ENCODE measurements at regions of chr12 and their contacts with region 1.

Region 1: GRCh38 chr12:29782285-29782870 is 1.4 kb downstream of the TMTC1 start:
- DNase-seq: peak in 1 of 2 donors; percentile 24
- ATAC-seq: peak; percentile 25 to 64 (median 42)
- H3K4me3 ChIP-seq: peak overlapping the region; percentile 48 to 93 (median 82)
- H3K27ac ChIP-seq: peak overlapping the region; percentile 63 to 94 (median 89)
- H3K4me1 ChIP-seq: peaks cover 0 to 45% (median 20%) of the 10 kb centered on the region in 9 donors
- H3K27me3 ChIP-seq: peaks cover 0 to 39% (median 0%) of the 10 kb centered on the region in 7 donors
- CTCF ChIP-seq: no peak

Region 2: DNA sequence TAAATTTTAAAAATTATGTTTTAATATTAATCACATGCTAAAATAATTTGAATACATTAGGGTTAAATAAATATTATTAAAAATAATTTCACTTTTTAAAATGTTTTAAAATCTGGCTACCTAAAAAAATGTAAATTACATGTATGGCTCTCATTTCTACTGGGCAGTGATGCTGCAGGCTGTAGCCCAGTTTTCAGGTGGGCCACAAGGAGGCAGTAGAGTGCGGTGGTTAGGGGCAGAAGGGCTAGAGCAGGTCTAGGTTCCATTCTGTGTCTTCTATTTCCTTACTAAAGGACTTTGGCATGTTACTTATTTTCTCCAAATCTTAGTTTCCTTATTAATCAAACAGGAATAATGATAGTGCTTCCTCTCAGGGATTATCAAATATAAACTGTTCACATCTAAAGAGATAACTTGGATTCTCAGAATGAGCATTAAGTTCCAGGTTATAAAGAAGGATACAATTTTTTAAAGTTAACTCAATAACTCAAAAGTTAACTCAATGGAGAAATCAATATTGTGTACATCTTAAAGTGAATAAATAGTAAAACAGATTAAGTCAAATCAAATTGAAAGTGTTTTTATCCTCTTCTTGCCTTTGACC is 230.0 kb before region 1 on chr12:
- intact Hi-C with region 1: loop called in 6 of 10 experiments (anchors 5 to 10 kb)
- DNase-seq: peak; percentile 74 to 75
- ATAC-seq: peak; percentile 80 to 96 (median 92)
- H3K4me3 ChIP-seq: no peak overlapping the region
- H3K27ac ChIP-seq: peak overlapping the region in 4 of 10 donors; percentile 3 to 56 (median 26)
- H3K4me1 ChIP-seq: peaks cover 0 to 23% (median 14%) of the 10 kb centered on the region in 9 donors
- H3K27me3 ChIP-seq: no peaks in the 10 kb centered on the region
- CTCF ChIP-seq: peak; percentile 74 to 98 (median 94)

Region 3: DNA sequence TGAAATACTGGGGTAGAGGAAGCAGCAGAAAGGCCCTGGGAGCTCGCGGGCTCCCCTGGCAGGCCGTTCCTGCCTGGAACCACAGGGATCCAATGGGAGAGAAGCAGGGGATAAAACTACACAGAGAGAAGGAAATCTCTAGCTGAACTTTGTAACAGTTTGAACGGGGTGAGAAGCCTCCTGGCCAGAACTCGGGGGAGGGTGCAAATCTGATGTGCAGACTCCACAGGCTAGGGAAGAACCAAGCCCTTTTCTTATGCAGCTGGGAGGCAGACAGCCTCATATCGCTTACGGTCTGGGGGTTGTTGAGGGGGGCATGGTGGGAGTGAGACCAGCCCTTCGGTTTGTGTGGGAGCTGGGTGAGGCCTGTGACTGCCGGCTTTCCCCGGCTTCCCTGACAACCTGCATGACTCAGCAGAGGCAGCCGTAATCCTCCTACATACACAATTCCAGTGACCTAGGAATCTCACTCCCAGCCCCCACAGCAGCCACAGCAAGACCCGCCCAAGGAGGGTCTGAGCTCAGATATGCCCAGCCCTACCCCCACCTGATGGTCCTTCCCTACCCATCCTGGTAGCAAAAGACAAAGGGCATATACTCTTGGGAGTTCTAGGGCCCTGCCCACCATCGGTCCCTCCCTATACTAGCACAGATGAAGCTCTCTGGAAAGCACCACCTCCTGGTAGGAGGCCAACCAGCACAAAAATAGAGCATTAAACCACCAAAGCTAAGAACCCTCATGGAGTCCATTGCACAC is 141.6 kb before region 1 on chr12:
- intact Hi-C with region 1: loop called in 1 of 10 experiments (anchors 10 kb)
- DNase-seq: peak; percentile 40 to 66
- ATAC-seq: peak; percentile 58 to 90 (median 72)
- H3K4me3 ChIP-seq: peak overlapping the region in 3 of 10 donors; percentile 5 to 20 (median 12)
- H3K27ac ChIP-seq: peak overlapping the region in 9 of 10 donors; percentile 46 to 84 (median 70)
- H3K4me1 ChIP-seq: peaks cover 0 to 27% (median 20%) of the 10 kb centered on the region in 9 donors
- H3K27me3 ChIP-seq: no peaks in the 10 kb centered on the region
- CTCF ChIP-seq: peak in 3 of 9 donors; percentile 11 to 47 (median 26)

Region 4: DNA sequence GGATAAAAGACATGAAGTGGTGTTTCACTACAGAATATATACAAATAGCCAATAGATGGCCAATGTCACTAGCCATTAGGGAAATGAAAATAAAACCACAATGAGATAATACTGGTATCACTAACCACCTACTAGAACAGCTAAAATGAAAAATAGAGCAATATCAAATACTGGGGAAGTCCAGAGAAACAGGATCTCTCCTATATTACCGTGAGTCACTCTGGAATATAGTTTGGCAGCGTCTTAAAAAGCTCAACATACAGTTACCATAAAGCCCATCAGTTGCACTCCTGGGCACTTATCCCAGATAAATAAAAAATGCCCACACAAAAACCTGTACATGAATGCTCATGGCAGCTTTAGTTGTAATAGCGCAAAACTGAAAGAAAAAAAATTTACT is 100.3 kb before region 1 on chr12:
- intact Hi-C with region 1: no loop called
- DNase-seq: no peak
- ATAC-seq: no peak
- H3K4me3 ChIP-seq: no peak overlapping the region
- H3K27ac ChIP-seq: no peak overlapping the region
- H3K4me1 ChIP-seq: peaks cover 0 to 15% (median 6%) of the 10 kb centered on the region in 9 donors
- H3K27me3 ChIP-seq: no peaks in the 10 kb centered on the region
- CTCF ChIP-seq: no peak

Region 5: GRCh38 chr12:29710104-29710503 is 72.3 kb before region 1 on chr12:
- intact Hi-C with region 1: loop called in 1 of 10 experiments (anchors 5 kb)
- DNase-seq: peak; percentile 31 to 53
- ATAC-seq: peak; percentile 61 to 87 (median 75)
- H3K4me3 ChIP-seq: peak overlapping the region in 1 of 10 donors; percentile 8
- H3K27ac ChIP-seq: peak overlapping the region in 7 of 10 donors; percentile 19 to 71 (median 63)
- H3K4me1 ChIP-seq: peaks cover 2 to 70% (median 30%) of the 10 kb centered on the region in 9 donors
- H3K27me3 ChIP-seq: no peaks in the 10 kb centered on the region
- CTCF ChIP-seq: no peak

Region 6: GRCh38 chr12:29743801-29744200 is 38.6 kb before region 1 on chr12:
- intact Hi-C with region 1: loop called in 4 of 10 experiments (anchors 5 kb)
- DNase-seq: no peak
- ATAC-seq: peak in 3 of 8 donors; percentile 39 to 54 (median 44)
- H3K4me3 ChIP-seq: no peak overlapping the region
- H3K27ac ChIP-seq: peak overlapping the region in 8 of 10 donors; percentile 9 to 83 (median 34)
- H3K4me1 ChIP-seq: peaks cover 0 to 57% (median 45%) of the 10 kb centered on the region in 9 donors
- H3K27me3 ChIP-seq: no peaks in the 10 kb centered on the region
- CTCF ChIP-seq: no peak

Measured in heart right ventricle (tissue), 16 donors.